Activated T-helper 2 cell treated with anti-CD3 and anti-CD28 coated beads, Interferon-gamma antibody, Interleukin-2, Interleukin-4, amounts not matched to agents 10 μg/mL and 5 μg/mL and 100 μg/mL, durations not matched to agents 14 hours and 24 hours and 36 hours (primary cell): ENCODE measurements at regions of chr15 and their contacts with region 1.

Region 1: GRCh38 chr15:60389261-60390077 is 8.3 kb downstream of the ANXA2 start:
- DNase-seq: peak; percentile 62
- H3K4me3 Mint-ChIP-seq: peak overlapping the region; percentile 26
- H3K27ac Mint-ChIP-seq: peak overlapping the region; percentile 75
- H3K4me1 Mint-ChIP-seq: peaks cover 63% of the 10 kb centered on the region
- H3K27me3 Mint-ChIP-seq: no peaks in the 10 kb centered on the region

Region 2: DNA sequence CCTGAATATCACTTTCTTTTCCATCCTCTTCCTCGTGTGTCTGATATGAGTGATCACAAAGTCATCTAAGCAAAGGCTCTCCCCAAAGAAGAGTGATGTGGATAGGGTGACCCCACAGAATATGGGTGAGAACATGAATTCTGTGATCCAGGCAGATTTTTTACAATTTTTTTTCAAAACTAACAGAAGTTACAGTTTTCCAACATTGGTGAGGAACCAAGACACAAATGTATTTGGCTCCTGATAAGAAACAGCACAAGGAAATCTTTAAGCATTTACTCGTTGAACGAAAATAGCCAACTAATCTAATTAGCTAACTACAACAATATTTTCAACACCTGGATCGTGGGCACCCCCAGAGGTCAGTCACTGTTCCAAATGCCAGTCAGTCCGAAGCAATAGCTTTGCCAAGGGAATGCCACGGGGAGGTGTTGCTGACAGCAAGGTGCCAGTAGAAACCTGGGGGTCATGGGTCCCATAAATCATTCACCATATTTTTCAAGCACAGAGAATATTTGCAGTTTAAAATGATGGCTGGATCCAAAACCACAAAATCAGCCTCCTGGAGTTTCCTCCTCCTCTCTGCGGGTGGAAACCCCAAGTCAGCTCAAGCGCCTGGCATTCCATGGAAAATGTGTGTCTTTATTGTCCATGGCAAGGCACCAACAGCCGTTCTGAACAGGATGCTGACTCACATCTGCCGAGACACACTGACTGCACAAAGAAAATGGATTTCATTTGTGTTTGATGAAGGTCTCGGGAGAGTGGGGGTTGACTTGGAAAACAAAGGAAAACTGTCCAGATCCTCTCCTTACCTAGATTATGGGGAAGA is 18.4 kb before region 1 on chr15:
- intact Hi-C with region 1: loop called (anchors 2 kb)
- DNase-seq: no peak
- H3K4me3 Mint-ChIP-seq: no peak overlapping the region
- H3K27ac Mint-ChIP-seq: peak overlapping the region; percentile 93
- H3K4me1 Mint-ChIP-seq: peaks cover 29% of the 10 kb centered on the region
- H3K27me3 Mint-ChIP-seq: no peaks in the 10 kb centered on the region

Region 3: GRCh38 chr15:60408438-60409105 is 19.1 kb after region 1 on chr15:
- intact Hi-C with region 1: loop called (anchors 1 kb)
- DNase-seq: no peak
- H3K4me3 Mint-ChIP-seq: no peak overlapping the region
- H3K27ac Mint-ChIP-seq: peak overlapping the region; percentile 62
- H3K4me1 Mint-ChIP-seq: peaks cover 16% of the 10 kb centered on the region
- H3K27me3 Mint-ChIP-seq: peaks cover 7% of the 10 kb centered on the region

Region 4: DNA sequence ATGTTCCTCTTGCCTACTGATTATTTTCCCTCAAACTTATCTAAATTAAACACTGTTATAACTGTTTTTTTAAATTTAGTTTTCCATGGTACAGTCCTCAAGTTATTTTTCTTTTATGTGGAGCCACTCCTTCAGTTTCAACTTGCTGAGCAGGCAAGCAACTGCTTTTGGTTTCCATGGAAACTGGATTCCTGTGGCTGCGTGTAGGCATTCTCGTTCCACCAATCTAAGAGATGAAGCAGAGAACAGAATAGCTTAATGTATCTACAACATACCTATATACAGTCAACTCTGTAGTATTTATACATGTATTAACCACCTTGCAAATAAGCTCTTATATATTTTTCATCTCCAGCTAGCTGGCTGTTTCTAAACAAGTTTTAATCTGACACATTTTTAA is 34.1 kb after region 1 on chr15:
- intact Hi-C with region 1: no loop called
- DNase-seq: no peak
- H3K4me3 Mint-ChIP-seq: no peak overlapping the region
- H3K27ac Mint-ChIP-seq: peak overlapping the region; percentile 33
- H3K4me1 Mint-ChIP-seq: peaks cover 8% of the 10 kb centered on the region
- H3K27me3 Mint-ChIP-seq: no peaks in the 10 kb centered on the region

Region 5: DNA sequence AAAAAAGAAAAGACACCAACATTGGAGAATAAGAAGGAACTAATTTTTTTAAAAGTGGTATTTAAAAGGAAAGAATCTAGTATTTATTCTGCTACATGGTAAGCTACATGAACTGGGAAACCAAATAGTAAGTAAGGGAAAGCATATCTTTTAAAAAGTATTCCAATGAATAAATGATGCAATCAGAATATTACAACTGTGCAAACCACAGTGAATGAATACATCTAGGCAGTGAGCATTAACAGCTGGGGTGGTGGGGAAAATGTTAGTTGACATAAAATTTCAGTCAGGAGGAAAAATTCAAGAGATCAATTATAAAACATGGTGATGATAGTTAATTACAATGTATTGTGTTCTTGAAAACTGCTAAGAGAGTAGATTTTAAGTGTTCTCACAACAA is 72.6 kb after region 1 on chr15:
- intact Hi-C with region 1: no loop called
- DNase-seq: no peak
- H3K4me3 Mint-ChIP-seq: no peak overlapping the region
- H3K27ac Mint-ChIP-seq: no peak overlapping the region
- H3K4me1 Mint-ChIP-seq: peaks cover 5% of the 10 kb centered on the region
- H3K27me3 Mint-ChIP-seq: no peaks in the 10 kb centered on the region